Natural killer cell (primary cell): ENCODE measurements at regions of chr1 and their contacts with region 1.

Region 1: DNA sequence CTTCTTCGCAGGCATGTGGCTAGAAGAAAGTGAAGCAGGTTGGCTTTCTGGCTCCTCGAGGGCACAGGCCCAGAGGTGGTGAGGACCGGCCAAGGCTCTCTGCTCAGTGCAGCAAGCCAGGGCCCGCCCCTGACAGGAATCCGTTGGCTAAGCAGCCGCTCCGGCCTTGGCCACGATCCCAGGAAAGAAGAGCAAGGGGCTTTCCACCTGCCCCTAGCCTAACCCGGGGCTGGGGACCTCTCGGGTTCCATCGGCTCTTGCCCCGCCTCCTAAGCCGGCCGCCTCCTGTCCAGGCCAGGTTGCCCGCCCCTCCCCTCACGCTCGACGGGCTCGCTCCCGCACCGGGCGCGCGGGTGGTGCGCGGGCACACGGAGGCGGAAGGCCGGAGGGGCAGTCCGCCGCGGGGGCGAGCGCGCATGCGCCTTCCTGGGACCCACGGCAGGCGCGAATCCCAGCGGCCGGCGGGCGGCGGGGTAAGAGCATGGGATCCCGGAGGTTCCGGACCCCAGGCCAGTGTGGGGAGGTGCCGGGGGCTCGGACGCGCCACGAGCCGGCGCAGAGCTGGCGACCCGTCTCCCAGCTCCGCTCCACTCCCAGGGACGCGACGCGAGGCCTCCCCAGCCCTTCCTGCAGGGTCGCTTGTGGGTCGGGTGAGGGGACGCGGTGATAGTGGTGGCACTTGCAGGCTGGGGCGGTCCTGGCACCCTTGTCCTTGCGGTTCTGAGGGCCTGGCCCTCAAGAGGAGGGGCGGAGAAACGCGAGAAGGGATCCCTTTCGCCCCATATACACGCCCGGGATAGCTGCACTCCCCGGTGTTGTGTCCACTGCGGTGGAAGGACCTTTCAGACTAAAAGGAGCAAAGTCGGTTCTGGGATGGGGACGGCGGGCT is at the start of gene ALG6:
- DNase-seq: peak; percentile 93 to 95
- ATAC-seq: peak; percentile 95 to 99 (median 96)
- H3K4me3 ChIP-seq: peak within 1 kb of the TSS; percentile 95
- H3K4me3 Mint-ChIP-seq: peak within 1 kb of the TSS; percentile 92
- H3K27ac ChIP-seq: peak within 1 kb of the TSS; percentile 82
- H3K27ac Mint-ChIP-seq: peak within 1 kb of the TSS; percentile 76 to 83
- H3K4me1 ChIP-seq: peaks cover 15% of the 10 kb centered on the region
- H3K4me1 Mint-ChIP-seq: peaks cover 17 to 25% of the 10 kb centered on the region in 2 donors
- H3K27me3 ChIP-seq: peaks cover 4% of the 10 kb centered on the region
- H3K27me3 Mint-ChIP-seq: peaks cover 0 to 8% of the 10 kb centered on the region in 2 donors
- CTCF ChIP-seq: no peak
- total RNA-seq, gene ALG6: 21.3 to 28.0 (median 23.4) TPM

Region 2: GRCh38 chr1:62436466-62437256 is 930.8 kb before region 1 on chr1 and contains the start of gene USP1:
- intact Hi-C with region 1: loop called (anchors 5 kb)
- DNase-seq: peak; percentile 96 to 99
- ATAC-seq: peak; percentile 79 to 92 (median 80)
- H3K4me3 ChIP-seq: peak within 1 kb of the TSS; percentile 84
- H3K4me3 Mint-ChIP-seq: peak within 1 kb of the TSS; percentile 94
- H3K27ac ChIP-seq: peak within 1 kb of the TSS; percentile 93
- H3K27ac Mint-ChIP-seq: peak within 1 kb of the TSS; percentile 98 to 99
- H3K4me1 ChIP-seq: peaks cover 14% of the 10 kb centered on the region
- H3K4me1 Mint-ChIP-seq: peaks cover 40 to 48% of the 10 kb centered on the region in 2 donors
- H3K27me3 ChIP-seq: no peaks in the 10 kb centered on the region
- H3K27me3 Mint-ChIP-seq: no peaks in the 10 kb centered on the region
- CTCF ChIP-seq: no peak
- total RNA-seq, gene USP1: 22.1 to 34.0 (median 26.8) TPM

Region 3: GRCh38 chr1:63522891-63523728 is 155.7 kb after region 1 on chr1 and contains the starts of genes EFCAB7 and ITGB3BP:
- intact Hi-C with region 1: loop called (anchors 2 kb)
- DNase-seq: peak; percentile 75 to 91
- ATAC-seq: peak; percentile 83 to 87 (median 84)
- H3K4me3 ChIP-seq: peak within 1 kb of the TSS; percentile 68
- H3K4me3 Mint-ChIP-seq: peak within 1 kb of the TSS; percentile 96
- H3K27ac ChIP-seq: peak within 1 kb of the TSS; percentile 86
- H3K27ac Mint-ChIP-seq: peak within 1 kb of the TSS; percentile 96 to 97
- H3K4me1 ChIP-seq: peaks cover 6% of the 10 kb centered on the region
- H3K4me1 Mint-ChIP-seq: peaks cover 19 to 25% of the 10 kb centered on the region in 2 donors
- H3K27me3 ChIP-seq: no peaks in the 10 kb centered on the region
- H3K27me3 Mint-ChIP-seq: no peaks in the 10 kb centered on the region
- CTCF ChIP-seq: no peak
- total RNA-seq, gene EFCAB7: 5.4 to 7.5 (median 6.0) TPM
- total RNA-seq, gene ITGB3BP: 20.7 to 29.8 (median 21.3) TPM

Region 4: DNA sequence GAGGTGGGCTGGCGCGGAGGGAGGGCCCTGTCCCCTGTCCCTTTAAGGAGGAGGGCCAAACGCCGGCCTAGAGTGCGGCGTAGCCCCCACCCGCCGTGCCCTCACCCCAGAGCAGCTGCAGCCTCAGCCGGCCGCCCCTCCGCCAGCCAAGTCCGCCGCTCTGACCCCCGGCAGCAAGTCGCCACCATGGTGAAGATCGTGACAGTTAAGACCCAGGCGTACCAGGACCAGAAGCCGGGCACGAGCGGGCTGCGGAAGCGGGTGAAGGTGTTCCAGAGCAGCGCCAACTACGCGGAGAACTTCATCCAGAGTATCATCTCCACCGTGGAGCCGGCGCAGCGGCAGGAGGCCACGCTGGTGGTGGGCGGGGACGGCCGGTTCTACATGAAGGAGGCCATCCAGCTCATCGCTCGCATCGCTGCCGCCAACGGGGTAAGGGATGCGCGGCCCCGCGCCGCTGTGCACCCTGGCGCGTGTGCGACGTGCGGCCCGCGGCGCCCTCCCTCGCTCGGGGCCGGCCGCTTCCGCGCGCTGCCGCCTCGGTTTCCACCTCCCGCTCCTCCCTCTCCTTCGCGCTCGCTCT is 225.9 kb after region 1 on chr1 and contains the start of gene PGM1:
- intact Hi-C with region 1: loop called (anchors 5 kb)
- DNase-seq: peak; percentile 70 to 85
- ATAC-seq: peak; percentile 81 to 92 (median 85)
- H3K4me3 ChIP-seq: peak within 1 kb of the TSS; percentile 90
- H3K4me3 Mint-ChIP-seq: peak within 1 kb of the TSS; percentile 97
- H3K27ac ChIP-seq: peak within 1 kb of the TSS; percentile 86
- H3K27ac Mint-ChIP-seq: peak within 1 kb of the TSS; percentile 92 to 96
- H3K4me1 ChIP-seq: peaks cover 13% of the 10 kb centered on the region
- H3K4me1 Mint-ChIP-seq: peaks cover 10 to 32% of the 10 kb centered on the region in 2 donors
- H3K27me3 ChIP-seq: no peaks in the 10 kb centered on the region
- H3K27me3 Mint-ChIP-seq: no peaks in the 10 kb centered on the region
- CTCF ChIP-seq: no peak
- total RNA-seq, gene PGM1: 23.5 to 31.4 (median 23.7) TPM

Region 5: DNA sequence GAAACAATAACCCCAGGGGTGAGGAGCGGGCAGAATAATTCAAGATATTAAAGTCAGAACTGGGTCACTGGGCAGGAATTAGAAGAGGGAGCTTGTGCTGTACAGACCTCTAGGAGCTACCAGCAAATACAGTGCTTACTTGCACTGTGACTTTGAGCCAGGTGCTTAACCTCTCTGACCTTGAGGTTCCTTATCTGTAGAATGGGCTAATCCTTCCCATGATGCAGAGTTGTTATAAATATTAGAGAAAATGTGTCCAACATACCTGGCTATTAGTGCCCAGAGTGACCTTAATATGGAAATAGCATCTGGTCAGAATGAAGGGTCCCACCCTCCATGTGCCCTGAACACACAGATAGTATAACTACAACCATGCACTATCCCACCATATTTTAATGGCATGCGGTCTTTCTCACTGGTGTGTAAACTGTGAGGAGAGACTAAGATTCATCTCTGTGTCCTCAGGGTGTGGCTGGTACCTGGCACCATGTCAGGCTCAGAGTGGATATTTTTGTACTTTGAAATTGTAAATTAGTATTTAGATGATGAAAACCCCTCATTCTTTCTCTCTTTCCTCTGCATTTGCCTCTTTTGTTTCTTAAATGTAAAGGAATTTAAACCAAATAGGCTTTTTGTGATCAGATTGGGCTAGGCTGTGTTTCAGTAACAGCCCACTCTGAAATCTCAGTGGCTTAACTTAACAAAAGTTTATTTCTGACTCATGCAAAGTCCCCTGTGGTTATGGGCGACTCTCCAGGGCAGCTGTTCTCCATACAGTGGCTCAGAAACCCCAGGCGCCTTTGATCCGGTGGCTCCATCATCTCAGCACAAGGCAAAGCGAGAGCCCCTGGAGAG is 346.4 kb after region 1 on chr1:
- intact Hi-C with region 1: no loop called
- DNase-seq: no peak
- ATAC-seq: no peak
- H3K4me3 ChIP-seq: no peak overlapping the region
- H3K4me3 Mint-ChIP-seq: no peak overlapping the region
- H3K27ac ChIP-seq: no peak overlapping the region
- H3K27ac Mint-ChIP-seq: no peak overlapping the region
- H3K4me1 ChIP-seq: no peaks in the 10 kb centered on the region
- H3K4me1 Mint-ChIP-seq: no peaks in the 10 kb centered on the region
- H3K27me3 ChIP-seq: no peaks in the 10 kb centered on the region
- H3K27me3 Mint-ChIP-seq: peaks cover 4 to 7% of the 10 kb centered on the region in 2 donors
- CTCF ChIP-seq: no peak

Region 6: GRCh38 chr1:63892632-63893395 is 525.4 kb after region 1 on chr1:
- intact Hi-C with region 1: loop called (anchors 5 kb)
- DNase-seq: peak; percentile 37 to 62
- ATAC-seq: peak; percentile 89 to 96 (median 94)
- H3K4me3 ChIP-seq: no peak overlapping the region
- H3K4me3 Mint-ChIP-seq: peak overlapping the region; percentile 43
- H3K27ac ChIP-seq: peak overlapping the region; percentile 77
- H3K27ac Mint-ChIP-seq: peak overlapping the region; percentile 80 to 82
- H3K4me1 ChIP-seq: peaks cover 13% of the 10 kb centered on the region
- H3K4me1 Mint-ChIP-seq: peaks cover 19 to 29% of the 10 kb centered on the region in 2 donors
- H3K27me3 ChIP-seq: no peaks in the 10 kb centered on the region
- H3K27me3 Mint-ChIP-seq: peaks cover 16 to 61% of the 10 kb centered on the region in 2 donors
- CTCF ChIP-seq: no peak